ENCODE measurements at regions of chr2 and their contacts with region 1.

Region 1: DNA sequence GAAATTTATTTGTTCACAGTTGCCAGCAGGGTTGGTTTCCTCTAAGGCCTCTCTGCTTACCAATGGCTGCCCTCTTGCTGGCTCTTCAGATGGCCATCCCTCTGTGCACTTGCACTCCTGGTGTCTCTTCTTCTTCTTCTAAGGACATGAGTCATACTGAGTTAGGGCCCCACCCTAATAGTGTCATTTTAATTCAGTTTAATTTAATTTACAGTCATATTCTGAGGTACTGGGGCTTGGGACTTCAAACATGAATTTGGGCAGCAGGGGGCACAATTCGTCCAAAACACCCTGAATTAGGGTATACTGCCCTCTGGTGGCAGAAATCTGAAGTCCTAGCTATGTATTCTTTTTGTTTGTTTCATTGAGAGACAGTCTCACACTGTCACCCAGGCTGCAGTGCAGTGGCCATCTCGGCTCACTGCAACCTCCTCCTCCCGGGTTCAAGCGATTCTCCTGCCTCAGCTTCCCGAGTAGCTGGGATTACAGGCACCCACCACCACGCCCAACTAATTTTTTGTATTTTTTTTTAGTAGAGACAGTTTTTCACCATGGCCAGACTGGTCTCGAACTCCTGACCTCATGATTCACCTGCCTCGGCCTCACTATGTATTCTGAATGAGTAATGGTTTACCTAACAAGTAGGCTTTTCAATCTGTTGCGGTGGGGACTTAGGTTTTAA is 19.8 kb downstream of the SLC4A1AP start:
- DNase-seq: peak; percentile 84
- ATAC-seq: peak; percentile 95
- H3K4me3 Mint-ChIP-seq: no peak overlapping the region
- H3K27ac Mint-ChIP-seq: no peak overlapping the region; the same call in 1 of the 2 replicates
- H3K4me1 Mint-ChIP-seq: no peaks in the 10 kb centered on the region
- H3K27me3 Mint-ChIP-seq: no peaks in the 10 kb centered on the region
- CTCF ChIP-seq: peak; percentile 98

Region 2: GRCh38 chr2:27428213-27428977 is 255.1 kb before region 1 on chr2 and contains the start of gene NRBP1:
- CTCF ChIA-PET with region 1: interaction called, 13 read pairs
- POLR2A ChIA-PET with region 1: no interaction called
- DNase-seq: peak; percentile 95
- ATAC-seq: peak; percentile 90
- H3K4me3 Mint-ChIP-seq: peak within 1 kb of the TSS; percentile 96
- H3K27ac Mint-ChIP-seq: peak within 1 kb of the TSS; percentile 93
- H3K4me1 Mint-ChIP-seq: peaks cover 21% of the 10 kb centered on the region
- H3K27me3 Mint-ChIP-seq: no peaks in the 10 kb centered on the region; the same call in 1 of the 2 replicates
- CTCF ChIP-seq: no peak
- total RNA-seq, gene NRBP1: 108 to 110 TPM (median 108 TPM) in 3 replicates

Region 3: DNA sequence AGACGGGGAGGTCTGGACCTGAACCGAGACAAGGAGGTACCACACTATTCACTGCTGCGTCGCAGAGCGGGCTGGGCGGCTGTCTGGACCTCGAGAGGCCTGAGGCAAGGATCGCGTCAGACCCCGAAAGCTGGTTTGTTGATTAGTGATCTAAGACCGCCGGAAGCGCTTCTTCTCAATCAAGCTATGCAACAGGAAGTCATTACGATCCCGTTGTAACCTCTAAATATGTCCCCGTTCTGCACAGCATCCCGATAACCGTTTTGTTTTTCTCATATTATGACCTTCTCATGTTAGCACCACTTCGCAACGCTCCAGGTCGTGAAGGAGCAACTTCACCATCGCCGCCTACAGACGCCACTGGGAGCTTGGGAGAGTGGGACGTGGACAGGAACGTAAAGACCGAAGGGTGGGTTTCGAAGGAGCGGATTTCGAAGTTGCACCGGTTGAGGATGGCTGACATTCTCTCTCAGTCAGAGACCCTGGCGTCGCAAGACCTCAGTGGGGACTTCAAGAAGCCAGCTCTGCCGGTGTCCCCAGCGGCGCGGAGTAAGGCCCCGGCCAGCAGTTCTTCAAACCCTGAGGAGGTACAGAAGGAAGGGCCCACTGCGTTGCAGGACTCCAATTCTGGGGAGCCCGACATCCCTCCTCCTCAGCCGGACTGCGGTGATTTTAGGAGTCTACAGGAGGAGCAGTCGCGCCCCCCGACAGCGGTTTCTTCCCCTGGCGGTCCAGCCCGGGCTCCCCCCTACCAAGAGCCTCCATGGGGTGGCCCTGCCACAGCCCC is 19.9 kb before region 1 on chr2 and contains the starts of genes SLC4A1AP and SUPT7L:
- CTCF ChIA-PET with region 1: interaction called, 27 read pairs
- POLR2A ChIA-PET with region 1: no interaction called
- DNase-seq: peak; percentile 66
- ATAC-seq: peak; percentile 83
- H3K4me3 Mint-ChIP-seq: peak within 1 kb of the TSS; percentile 99
- H3K27ac Mint-ChIP-seq: peak within 1 kb of the TSS; percentile 99
- H3K4me1 Mint-ChIP-seq: peaks cover 17% of the 10 kb centered on the region
- H3K27me3 Mint-ChIP-seq: no peaks in the 10 kb centered on the region
- CTCF ChIP-seq: no peak
- total RNA-seq, gene SLC4A1AP: 17.8 to 20.1 TPM (median 19.3 TPM) in 3 replicates
- total RNA-seq, gene SUPT7L: 22.6 to 24.1 TPM (median 23.8 TPM) in 3 replicates

Region 4: DNA sequence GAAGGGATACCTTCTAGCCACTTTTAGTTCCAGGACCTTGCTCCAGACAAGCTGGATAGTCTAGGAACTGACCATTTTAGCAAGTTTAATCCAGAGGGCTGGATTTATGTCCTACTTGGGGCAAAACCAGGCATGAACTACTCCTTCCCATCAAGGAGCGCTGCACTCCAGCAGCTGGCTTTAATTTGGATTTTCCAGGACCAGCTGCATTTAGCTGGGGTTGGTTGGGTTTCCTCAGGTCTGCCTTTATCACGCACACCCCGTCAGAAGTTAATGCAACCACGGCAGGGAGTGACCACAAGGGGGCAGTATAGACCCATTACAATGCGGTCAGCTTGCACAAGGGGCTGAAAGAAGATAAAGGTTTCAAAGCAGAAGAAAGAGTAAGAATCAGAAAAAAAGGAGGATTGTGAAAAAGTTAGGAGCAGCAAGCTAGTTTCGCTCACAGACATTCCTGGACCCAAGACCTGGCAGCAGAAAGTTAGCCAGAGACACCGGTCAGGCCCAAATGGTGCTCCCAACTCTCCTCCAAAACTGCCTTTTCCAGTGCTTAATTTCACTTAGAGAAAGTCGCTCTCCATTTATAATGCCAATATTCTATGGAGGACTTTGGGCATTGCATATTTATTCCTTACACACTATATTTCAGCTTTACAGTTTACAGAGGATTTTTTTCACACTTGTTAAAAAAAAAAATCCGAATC is 20.3 kb after region 1 on chr2:
- CTCF ChIA-PET with region 1: interaction called, 26 read pairs
- POLR2A ChIA-PET with region 1: no interaction called
- DNase-seq: peak; percentile 92
- ATAC-seq: peak; percentile 86
- H3K4me3 Mint-ChIP-seq: no peak overlapping the region
- H3K27ac Mint-ChIP-seq: no peak overlapping the region
- H3K4me1 Mint-ChIP-seq: no peaks in the 10 kb centered on the region; the same call in 1 of the 2 replicates
- H3K27me3 Mint-ChIP-seq: no peaks in the 10 kb centered on the region
- CTCF ChIP-seq: peak; percentile 88

Region 5: GRCh38 chr2:27723372-27724144 is 40.0 kb after region 1 on chr2:
- CTCF ChIA-PET with region 1: interaction called, 17 read pairs
- POLR2A ChIA-PET with region 1: no interaction called
- DNase-seq: peak; percentile 72
- ATAC-seq: peak; percentile 88
- H3K4me3 Mint-ChIP-seq: no peak overlapping the region
- H3K27ac Mint-ChIP-seq: peak overlapping the region; percentile 49; the same call in 1 of the 2 replicates
- H3K4me1 Mint-ChIP-seq: peaks cover 21% of the 10 kb centered on the region
- H3K27me3 Mint-ChIP-seq: no peaks in the 10 kb centered on the region
- CTCF ChIP-seq: peak; percentile 66

Measured in WTC11 (cell line).